ENCODE measurements at regions of chr1 and their contacts with region 1.

Region 1: GRCh38 chr1:27603681-27604578 is at the start of gene AHDC1:
- DNase-seq: peak; percentile 96
- ATAC-seq: peak; percentile 79
- H3K4me3 Mint-ChIP-seq: peak within 1 kb of the TSS; percentile 93
- H3K27ac Mint-ChIP-seq: peak within 1 kb of the TSS; percentile 85
- H3K4me1 Mint-ChIP-seq: peaks cover 41% of the 10 kb centered on the region
- H3K27me3 Mint-ChIP-seq: no peaks in the 10 kb centered on the region
- CTCF ChIP-seq: no peak
- total RNA-seq, gene AHDC1: 26.3 to 27.6 TPM

Region 2: GRCh38 chr1:27332536-27333281 is 271.2 kb before region 1 on chr1:
- CTCF ChIA-PET with region 1: interaction called, 13 read pairs
- POLR2A ChIA-PET with region 1: no interaction called
- intact Hi-C with region 1: no loop called
- DNase-seq: peak; percentile 73
- ATAC-seq: peak; percentile 91
- H3K4me3 Mint-ChIP-seq: no peak overlapping the region
- H3K27ac Mint-ChIP-seq: no peak overlapping the region
- H3K4me1 Mint-ChIP-seq: peaks cover 27% of the 10 kb centered on the region
- H3K27me3 Mint-ChIP-seq: no peaks in the 10 kb centered on the region
- CTCF ChIP-seq: peak; percentile 94

Region 3: GRCh38 chr1:27416387-27417111 is 187.4 kb before region 1 on chr1:
- CTCF ChIA-PET with region 1: interaction called, 36 read pairs
- POLR2A ChIA-PET with region 1: interaction called, 4 read pairs
- intact Hi-C with region 1: no loop called
- DNase-seq: peak; percentile 71
- ATAC-seq: peak; percentile 49
- H3K4me3 Mint-ChIP-seq: no peak overlapping the region
- H3K27ac Mint-ChIP-seq: peak overlapping the region; percentile 7
- H3K4me1 Mint-ChIP-seq: peaks cover 34% of the 10 kb centered on the region
- H3K27me3 Mint-ChIP-seq: no peaks in the 10 kb centered on the region
- CTCF ChIP-seq: peak; percentile 64

Region 4: GRCh38 chr1:27464926-27465647 is 138.8 kb before region 1 on chr1:
- CTCF ChIA-PET with region 1: no interaction called
- POLR2A ChIA-PET with region 1: no interaction called
- intact Hi-C with region 1: no loop called
- DNase-seq: no peak
- ATAC-seq: no peak
- H3K4me3 Mint-ChIP-seq: no peak overlapping the region
- H3K27ac Mint-ChIP-seq: peak overlapping the region; percentile 50
- H3K4me1 Mint-ChIP-seq: peaks cover 47% of the 10 kb centered on the region
- H3K27me3 Mint-ChIP-seq: no peaks in the 10 kb centered on the region
- CTCF ChIP-seq: no peak

Region 5: DNA sequence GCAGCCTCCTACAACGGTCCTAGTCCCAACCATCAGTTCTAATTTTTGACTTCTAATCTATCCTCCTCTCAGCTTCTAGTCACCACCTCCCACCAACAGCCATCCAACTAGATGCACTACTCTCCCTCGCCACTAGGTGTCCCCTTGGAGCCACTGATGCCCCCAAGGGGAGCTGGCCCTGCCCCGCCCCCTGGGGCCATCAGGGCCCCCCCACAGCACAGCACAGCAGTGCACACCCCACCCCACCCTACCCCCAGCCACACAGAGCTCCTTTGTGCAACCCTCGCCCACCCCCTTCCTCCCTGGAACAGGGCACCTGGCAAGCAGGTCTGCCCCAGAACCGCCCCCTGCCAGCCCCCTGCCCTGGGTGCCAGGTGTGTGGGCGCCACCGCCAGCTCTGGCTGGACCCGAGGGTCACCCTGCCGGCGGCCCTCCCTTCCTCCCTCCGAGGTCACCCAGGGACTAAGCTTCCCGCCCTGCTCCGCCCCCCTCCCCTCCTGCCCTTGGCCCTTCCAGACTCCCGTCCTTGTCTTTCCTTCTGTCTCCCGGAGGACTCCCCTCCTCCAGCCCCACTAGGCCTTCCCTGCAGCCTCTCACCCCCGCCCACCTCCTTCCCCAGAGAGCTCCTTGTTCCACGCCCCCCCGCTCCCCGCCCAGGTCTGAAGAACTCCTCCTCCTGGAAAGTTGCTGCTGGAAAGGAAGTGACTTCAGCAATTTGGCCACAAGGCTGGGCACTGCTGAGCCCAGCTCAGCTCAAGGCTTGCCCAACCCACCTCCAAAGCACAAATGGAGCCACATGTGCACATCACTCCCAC is 46.9 kb before region 1 on chr1:
- CTCF ChIA-PET with region 1: interaction called, 134 read pairs
- POLR2A ChIA-PET with region 1: interaction called, 4 read pairs
- intact Hi-C with region 1: loop called (anchors 5 kb)
- DNase-seq: peak; percentile 88
- ATAC-seq: peak; percentile 93
- H3K4me3 Mint-ChIP-seq: no peak overlapping the region
- H3K27ac Mint-ChIP-seq: peak overlapping the region; percentile 72
- H3K4me1 Mint-ChIP-seq: peaks cover 21% of the 10 kb centered on the region
- H3K27me3 Mint-ChIP-seq: no peaks in the 10 kb centered on the region
- CTCF ChIP-seq: peak; percentile 99

Region 6: GRCh38 chr1:27624467-27625178 is 20.7 kb after region 1 on chr1:
- CTCF ChIA-PET with region 1: interaction called, 113 read pairs
- POLR2A ChIA-PET with region 1: interaction called, 7 read pairs
- intact Hi-C with region 1: no loop called
- DNase-seq: peak; percentile 42
- ATAC-seq: peak; percentile 46
- H3K4me3 Mint-ChIP-seq: no peak overlapping the region
- H3K27ac Mint-ChIP-seq: no peak overlapping the region
- H3K4me1 Mint-ChIP-seq: peaks cover 24% of the 10 kb centered on the region
- H3K27me3 Mint-ChIP-seq: no peaks in the 10 kb centered on the region
- CTCF ChIP-seq: no peak

Region 7: DNA sequence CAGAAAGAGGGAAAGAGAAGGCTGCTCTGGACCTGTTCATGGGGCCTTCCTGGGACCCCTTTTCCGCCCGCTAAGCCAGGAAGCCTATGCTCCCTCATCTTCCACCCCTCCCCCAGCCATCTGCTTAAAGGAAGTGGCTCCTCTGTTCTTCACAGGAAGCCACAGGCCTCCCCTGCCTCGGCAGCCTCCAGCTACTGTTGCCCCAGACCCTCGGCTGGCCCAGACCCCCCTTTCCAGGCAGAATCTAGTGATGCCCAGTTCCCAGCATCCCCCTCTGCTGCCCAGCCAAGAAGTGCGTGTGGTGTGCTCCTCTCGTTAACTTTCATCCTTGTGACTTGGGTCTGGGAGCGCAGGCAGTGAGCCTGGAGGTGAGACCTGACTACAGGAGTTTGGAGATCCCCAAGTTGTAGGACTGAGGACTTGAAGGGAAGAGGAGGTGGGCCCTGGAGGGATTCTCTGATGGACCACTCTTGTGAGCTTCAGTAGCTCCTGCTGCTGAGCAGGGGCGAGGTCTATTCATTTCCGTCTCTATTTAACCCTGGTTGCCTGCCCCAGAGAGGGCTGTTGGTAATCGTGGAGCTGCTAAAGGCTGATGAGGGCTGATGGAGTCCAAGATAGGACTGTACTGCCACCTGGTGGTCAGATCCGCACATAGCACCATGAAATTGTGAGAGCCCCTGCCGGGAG is 58.9 kb after region 1 on chr1:
- CTCF ChIA-PET with region 1: interaction called, 533 read pairs
- POLR2A ChIA-PET with region 1: interaction called, 98 read pairs
- intact Hi-C with region 1: loop called (anchors 1 kb)
- DNase-seq: peak; percentile 96
- ATAC-seq: peak; percentile 80
- H3K4me3 Mint-ChIP-seq: peak overlapping the region; percentile 68
- H3K27ac Mint-ChIP-seq: peak overlapping the region; percentile 98
- H3K4me1 Mint-ChIP-seq: peaks cover 50% of the 10 kb centered on the region
- H3K27me3 Mint-ChIP-seq: no peaks in the 10 kb centered on the region
- CTCF ChIP-seq: peak; percentile 75

Region 8: DNA sequence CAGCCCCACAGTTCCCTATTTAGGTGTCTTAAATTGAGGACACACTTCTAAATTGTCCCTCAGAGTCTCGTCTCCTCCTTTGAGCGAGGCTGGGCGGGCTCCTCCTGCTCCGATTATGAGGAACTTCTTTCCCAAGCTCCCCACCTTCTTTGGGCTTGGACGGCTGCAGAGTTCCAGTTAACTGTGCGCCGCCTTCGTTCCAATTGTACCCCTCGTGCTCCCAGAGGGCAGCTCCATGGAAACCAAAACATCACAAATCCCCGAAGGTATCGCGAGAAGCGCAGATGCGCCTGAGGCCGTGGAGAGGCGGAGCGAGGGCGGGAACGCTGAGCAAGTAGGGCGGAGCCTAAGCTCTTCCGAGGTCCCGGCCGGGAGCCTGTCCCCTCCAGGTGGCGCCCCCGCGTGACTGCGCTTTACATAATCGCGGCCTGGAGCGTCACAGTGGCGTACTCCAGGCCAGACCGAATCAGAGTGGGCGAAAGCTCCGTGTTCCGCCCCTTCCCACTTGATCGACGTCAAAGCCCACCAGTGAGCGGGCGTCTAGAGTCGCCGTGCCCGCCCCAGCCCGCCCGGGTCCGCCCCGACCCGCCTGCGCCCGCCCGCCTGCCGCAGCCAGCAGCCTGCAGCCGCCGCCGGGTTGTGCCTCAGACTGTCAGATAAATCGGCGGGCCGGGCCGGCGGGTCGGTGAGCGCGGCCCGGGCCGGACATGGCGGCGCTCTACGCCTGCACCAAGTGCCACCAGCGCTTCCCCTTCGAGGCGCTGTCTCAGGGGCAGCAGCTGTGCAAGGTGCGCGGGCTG is 121.6 kb after region 1 on chr1 and contains the start of gene FAM76A:
- CTCF ChIA-PET with region 1: interaction called, 4 read pairs
- POLR2A ChIA-PET with region 1: no interaction called
- intact Hi-C with region 1: loop called (anchors 10 kb)
- DNase-seq: peak; percentile 100
- ATAC-seq: peak; percentile 98
- H3K4me3 Mint-ChIP-seq: peak within 1 kb of the TSS; percentile 80
- H3K27ac Mint-ChIP-seq: peak within 1 kb of the TSS; percentile 94
- H3K4me1 Mint-ChIP-seq: peaks cover 24% of the 10 kb centered on the region
- H3K27me3 Mint-ChIP-seq: no peaks in the 10 kb centered on the region
- CTCF ChIP-seq: peak; percentile 36
- total RNA-seq, gene FAM76A: 6.9 to 7.9 TPM